ENCODE measurements at regions of chr20 and their contacts with region 1.

Region 1: DNA sequence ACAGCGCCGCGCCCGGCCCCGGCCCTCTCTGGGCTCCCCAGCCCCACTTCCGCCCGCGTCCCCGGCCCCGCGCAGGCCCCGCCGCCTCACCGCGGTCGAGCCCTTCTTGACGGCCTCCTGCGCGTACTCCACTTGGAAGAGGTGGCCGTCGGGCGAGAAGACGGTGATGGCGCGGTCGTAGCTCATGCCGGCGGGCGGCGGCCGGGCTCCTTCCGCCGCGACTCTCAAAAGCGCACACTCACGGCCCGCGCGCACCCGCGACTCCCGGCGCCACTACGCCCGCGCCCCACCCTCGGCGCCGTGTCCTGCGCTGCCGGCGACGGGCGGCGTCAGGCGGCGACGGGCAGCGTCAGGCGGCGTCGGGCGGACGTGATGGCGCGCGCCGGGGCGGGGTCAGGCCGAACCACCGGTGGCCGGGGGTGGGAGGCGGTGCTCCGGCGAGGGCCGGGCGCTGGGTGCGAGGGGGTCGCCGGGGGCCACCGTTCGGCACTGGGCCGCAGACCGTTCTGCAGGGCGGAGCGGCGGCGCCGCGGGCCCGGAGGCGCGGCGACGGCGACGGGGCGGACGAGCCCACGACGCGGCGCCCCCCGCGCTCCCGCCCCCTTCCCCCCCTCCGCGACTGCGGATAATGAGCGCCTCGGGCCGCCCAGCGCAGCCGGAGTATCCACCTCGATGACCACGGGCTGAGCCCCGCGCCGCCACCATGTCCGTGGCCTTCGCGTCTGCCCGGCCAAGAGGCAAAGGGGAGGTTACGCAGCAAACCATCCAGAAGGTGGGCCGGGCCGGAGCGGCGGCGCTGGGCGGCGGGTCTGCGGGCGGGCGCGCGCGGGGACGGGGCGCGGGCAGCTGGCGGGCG is at the starts of genes PSMA7 and SS18L1:
- DNase-seq: peak; percentile 52 to 94 (median 90)

Region 2: DNA sequence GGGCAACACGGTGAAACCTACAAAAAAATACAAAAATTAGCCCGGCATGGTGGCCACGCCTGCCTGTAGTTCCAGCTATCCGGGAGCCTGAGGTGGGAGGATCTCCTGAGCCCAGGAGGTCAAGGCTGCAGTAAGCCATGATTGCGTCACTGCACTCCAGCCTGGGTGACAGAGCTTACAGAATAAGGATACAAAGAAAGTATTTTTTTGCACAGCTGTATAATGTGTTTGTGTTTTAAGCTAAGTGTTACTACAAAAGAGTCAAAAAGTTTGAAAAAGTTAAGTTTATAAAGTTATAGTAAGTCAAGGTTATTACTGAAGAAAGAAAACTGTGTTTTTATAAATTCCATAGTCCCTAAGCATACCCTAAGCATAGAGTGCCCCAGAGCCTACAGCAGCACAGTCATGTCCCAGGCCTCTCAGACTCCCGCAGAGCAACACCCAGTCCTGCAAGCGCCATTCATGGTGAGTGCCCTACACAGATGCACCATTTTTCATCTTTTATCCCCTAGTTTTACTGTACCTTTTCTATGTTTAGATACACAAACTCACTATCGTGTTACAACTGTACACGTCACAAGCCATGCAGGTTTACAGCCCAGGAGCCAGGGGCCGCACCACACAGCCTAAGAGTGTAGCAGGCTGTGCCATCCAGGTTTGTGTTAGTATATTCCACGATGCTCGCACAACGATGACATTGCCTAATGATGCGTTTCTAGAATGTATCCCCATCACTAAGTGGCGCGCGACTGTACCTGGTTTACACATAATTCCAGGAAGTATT is 100.0 kb before region 1 on chr20:
- intact Hi-C with region 1: no loop called
- DNase-seq: no peak

Region 3: DNA sequence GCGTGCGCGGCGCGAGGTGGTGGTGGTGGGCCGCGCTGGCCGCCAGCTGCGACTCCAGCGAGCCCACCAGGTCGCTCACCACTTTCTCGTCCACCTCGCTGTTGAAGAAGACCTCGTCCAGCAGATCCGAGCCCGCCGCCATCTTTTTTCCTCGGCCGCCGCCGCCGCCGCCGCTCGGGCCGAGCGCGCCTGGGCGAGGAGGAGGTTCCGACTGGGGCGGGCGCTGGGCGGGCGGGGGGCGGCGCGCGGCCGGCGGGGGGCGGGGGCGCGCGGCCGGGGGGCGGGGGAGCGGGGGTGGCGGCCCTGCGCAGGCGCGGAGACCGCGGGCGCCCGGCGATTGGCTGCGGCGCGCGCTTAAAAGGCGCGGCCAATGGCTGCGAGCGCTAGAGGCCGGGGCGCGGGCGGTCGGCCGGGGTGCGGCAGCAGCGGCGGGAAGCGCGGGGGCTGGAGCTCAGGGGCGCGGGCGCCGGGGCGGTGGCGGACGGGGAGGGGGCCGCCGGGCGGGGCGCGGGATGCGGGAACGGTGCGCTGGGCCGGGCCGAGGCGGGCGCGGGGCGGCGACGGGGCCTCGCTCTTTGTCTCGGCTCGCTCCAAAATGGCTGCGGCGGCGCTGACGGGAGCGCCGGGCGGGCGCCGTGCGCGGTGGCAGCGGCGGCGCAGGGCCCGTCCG is 77.5 kb before region 1 on chr20 and contains the start of gene TAF4:
- intact Hi-C with region 1: loop called (anchors 5 kb)
- DNase-seq: peak in 41 of 42 donors; percentile 44 to 90 (median 79)

Region 4: GRCh38 chr20:62121776-62122631 is 21.3 kb before region 1 on chr20 and contains the start of gene LSM14B:
- intact Hi-C with region 1: loop called (anchors 2 kb)
- DNase-seq: peak; percentile 75 to 98 (median 95)

Region 5: GRCh38 chr20:62237801-62238571 is 94.6 kb after region 1 on chr20 and contains the start of gene OSBPL2:
- intact Hi-C with region 1: loop called (anchors 10 kb)
- DNase-seq: peak; percentile 98 to 100 (median 100)

Region 6: DNA sequence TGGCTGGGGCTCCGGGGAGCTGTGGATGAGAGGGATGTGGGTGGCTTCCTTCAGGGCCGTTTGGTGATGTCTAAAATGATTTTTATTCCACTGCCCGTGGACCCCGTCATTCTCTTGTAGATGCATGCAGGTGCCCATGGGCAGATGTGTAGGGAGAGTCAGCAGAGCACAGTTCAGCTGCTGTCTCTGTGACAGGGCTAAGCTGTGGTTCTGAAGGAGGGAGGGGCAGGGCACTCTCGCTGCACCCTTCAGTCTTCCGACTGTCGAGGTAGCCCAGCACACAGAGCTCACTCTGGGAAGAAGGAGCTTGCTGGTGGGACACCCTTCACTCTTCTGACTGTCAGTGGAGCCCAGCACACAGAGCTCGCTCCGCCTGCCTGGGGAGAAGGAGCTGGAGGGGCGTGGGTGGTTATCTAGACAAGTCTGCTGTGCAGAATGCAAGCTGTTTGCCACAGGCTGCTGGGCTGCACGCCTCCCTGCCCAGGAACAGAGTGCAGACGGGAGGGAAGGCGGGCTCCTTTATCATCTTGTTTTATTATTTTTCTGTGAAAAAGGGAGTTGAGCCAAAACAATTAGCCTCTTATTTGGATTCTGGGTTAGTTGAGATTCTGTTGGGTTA is 131.1 kb after region 1 on chr20:
- intact Hi-C with region 1: no loop called
- DNase-seq: peak; percentile 35 to 96 (median 80)